H1 (cell line): ENCODE measurements at regions of chr17 and their contacts with region 1.

Region 1: GRCh38 chr17:77606865-77607210 is 351.7 kb upstream of the TNRC6C start:
- DNase-seq: peak in 1 of 2 experiments; percentile 43
- H3K4me3 ChIP-seq: no peak overlapping the region
- H3K27ac ChIP-seq: no peak overlapping the region
- H3K4me1 ChIP-seq: no peaks in the 10 kb centered on the region; a peak in 1 of 7 replicates
- H3K27me3 ChIP-seq: no peaks in the 10 kb centered on the region; a peak in 2 of 7 replicates
- CTCF ChIP-seq: peak in 1 of 3 experiments; percentile 15; a peak in 1 of 4 replicates
- EP300 ChIP-seq: no peak
- POLR2A ChIP-seq: no peak
- RAD21 ChIP-seq: no peak

Region 2: DNA sequence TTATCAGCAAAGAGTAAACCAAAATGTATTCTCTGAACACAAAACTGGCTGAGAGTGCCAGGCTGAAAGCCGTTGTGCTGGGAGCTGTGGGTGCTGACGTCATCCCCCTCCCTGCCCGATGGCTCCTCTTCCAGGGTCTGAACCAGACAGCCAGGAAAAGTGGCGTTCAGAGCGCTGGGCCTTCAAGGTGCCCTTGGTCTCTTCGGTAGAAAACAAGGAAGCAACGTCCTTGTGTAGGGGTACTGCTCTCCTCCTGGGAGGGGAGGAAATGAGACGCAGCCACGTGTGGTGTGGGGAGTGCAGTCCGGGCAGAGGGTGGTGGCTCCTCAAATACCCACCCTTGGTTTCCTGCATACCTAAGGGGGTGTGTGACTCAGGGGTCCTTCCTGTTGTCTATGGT is 71.4 kb before region 1 on chr17:
- CTCF ChIA-PET with region 1: no interaction called
- POLR2A ChIA-PET with region 1: no interaction called
- DNase-seq: no peak
- H3K4me3 ChIP-seq: no peak overlapping the region
- H3K27ac ChIP-seq: no peak overlapping the region
- H3K4me1 ChIP-seq: peaks cover 0 to 2% (median under 1%) of the 10 kb centered on the region in 4 experiments; a peak in 4 of 7 replicates
- H3K27me3 ChIP-seq: peaks cover 0 to 3% (median under 1%) of the 10 kb centered on the region in 4 experiments; a peak in 3 of 7 replicates
- CTCF ChIP-seq: no peak
- EP300 ChIP-seq: no peak
- POLR2A ChIP-seq: no peak
- RAD21 ChIP-seq: no peak

Region 3: DNA sequence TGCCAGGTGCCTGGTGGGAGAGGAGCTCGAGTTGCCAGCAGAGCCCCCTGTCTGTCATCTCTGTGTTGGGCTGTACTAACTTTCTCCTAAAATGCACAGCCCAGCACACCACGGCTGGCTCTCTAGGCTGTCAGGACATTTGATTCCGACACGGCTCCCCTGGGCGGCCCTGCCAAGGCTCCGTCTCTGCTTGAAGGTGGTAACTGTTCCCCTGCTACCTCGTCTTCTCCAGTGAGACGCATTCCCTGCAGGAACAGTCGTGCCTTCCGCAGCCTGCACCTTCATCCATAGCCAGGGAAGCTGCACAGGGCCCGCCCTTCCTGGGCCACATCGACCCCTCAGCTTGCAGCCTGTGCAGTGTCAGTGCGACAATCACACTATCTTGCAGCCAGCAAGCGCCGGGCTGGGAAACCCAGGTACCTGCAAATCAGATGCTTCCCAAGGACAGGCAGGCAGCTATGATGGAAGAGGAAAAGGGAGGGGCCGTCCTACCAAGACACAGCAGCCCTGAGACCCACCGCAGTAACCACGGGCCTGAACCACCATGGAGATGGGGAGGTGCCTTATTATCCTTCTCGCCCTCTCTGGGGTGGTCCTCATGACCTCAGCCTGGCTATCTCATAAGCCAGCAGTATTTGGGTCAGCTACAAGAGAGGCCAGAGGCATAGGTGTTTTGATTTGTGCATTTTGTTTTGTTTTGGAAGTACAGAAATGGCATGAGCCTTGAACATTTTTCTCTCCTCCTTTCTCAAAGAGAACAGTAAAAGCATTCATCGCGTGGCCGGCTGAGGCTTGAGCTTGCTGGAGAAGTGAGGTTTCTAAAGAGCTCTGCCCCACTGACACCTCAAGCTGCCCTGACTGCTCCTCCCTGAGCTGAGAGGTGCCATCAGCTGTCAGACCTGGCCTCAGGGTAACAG is 10.1 kb before region 1 on chr17:
- CTCF ChIA-PET with region 1: interaction called, 28 read pairs
- POLR2A ChIA-PET with region 1: no interaction called
- DNase-seq: no peak
- H3K4me3 ChIP-seq: no peak overlapping the region
- H3K27ac ChIP-seq: no peak overlapping the region
- H3K4me1 ChIP-seq: no peaks in the 10 kb centered on the region; a peak in 1 of 7 replicates
- H3K27me3 ChIP-seq: no peaks in the 10 kb centered on the region; a peak in 1 of 7 replicates
- CTCF ChIP-seq: peak in 1 of 3 experiments; percentile 8; a peak in 1 of 4 replicates
- EP300 ChIP-seq: no peak
- POLR2A ChIP-seq: no peak
- RAD21 ChIP-seq: 0 out of 4 replicates have a peak, but pooled peaks of 1 of the 2 experiments have one; percentile 8